ENCODE measurements at regions of chrX and their contacts with region 1.

Region 1: DNA sequence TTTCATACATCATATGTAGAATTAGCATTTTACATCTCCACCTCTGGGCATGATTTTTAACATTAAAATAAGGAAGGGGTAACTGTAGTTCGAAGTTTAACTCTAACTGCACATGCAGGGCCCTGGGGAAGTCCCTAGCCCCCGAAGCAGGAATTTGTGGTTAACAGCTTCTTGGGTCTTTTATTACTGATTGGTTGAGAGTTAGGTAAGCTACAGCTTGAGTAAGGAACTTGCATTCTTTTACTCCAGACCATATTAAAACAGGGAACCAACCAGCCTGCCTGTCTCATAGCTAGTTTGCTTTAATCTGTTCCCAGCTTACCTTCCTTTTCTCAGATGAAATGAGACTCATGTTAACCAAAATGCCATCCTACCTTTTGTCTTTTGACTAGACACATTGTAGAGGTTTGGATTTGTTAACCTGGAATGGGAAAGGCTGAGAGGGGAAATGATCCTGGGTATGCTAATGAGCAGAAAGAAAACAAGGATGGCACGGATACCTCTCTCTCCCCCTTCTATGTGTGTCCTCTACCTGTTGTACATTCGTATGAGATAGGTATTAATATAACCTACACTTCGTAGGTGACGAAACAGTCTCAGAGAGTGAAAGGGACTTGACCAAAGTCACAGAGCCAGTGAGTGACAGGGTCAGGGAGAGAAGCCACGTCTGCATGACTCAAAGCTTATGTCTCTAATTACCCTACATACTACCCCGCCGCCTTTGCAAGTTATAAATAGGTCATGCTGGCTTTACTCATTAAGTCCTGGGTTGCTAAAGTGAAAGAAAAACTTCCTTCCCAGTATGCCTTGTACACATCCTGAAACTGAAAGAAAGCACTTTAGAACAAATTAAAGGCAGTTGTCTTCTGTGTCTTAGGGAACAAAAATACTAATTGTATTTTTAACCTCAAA is 119.5 kb upstream of the AFF2 start:
- DNase-seq: peak; percentile 44
- H3K4me3 Mint-ChIP-seq: peak overlapping the region; percentile 74
- H3K27ac Mint-ChIP-seq: peak overlapping the region; percentile 91
- H3K4me1 Mint-ChIP-seq: peaks cover 28% of the 10 kb centered on the region
- H3K27me3 Mint-ChIP-seq: no peaks in the 10 kb centered on the region

Region 2: DNA sequence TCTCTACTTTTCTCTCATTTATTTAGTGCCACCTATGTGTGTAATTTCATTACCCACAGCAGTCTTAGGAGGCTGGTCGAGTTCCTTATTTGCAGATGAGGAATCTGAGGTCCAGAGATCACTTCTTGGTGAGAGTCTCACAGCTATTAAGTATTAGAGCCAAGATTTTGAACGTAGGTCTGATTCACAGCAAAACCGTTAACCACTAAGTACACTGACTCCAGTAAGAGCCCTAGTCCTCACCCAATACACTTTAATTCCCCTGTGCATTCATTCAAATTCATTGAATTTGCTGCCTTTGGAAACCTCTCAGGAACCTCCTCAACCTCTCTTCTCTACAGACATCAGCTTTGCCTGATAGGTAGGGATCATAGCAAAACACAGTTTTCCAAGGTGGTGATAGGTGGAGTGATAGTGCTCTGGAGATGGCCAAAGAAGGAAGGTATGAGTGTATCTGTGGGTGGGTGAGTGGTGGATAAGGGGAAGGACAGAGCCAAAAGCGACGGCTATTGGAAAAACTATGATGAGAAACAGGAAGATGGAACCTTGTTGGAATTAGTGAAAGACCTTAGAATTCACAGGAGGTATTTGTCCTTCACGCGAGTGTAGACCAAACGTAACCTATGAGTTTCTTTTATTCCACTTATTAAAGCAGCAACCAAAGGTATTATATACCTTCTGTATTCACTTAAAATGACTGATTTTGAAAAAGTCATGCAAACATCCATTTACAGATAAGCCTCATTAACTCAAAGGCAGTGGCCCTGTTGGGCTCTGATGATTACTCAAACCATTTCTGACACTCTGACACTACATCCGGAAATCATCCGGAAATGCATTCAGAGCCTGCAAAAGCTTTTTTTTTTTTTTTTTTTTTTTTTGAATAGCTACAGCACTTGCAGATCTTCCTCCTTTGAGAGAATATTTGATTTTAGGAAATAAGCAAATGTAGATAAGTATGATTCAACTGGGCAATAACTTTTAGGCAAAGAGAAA is 462.9 kb before region 1 on chrX:
- intact Hi-C with region 1: loop called (anchors 2 kb)
- DNase-seq: no peak
- H3K4me3 Mint-ChIP-seq: peak overlapping the region; percentile 47
- H3K27ac Mint-ChIP-seq: peak overlapping the region; percentile 87
- H3K4me1 Mint-ChIP-seq: peaks cover 64% of the 10 kb centered on the region
- H3K27me3 Mint-ChIP-seq: no peaks in the 10 kb centered on the region

Region 3: DNA sequence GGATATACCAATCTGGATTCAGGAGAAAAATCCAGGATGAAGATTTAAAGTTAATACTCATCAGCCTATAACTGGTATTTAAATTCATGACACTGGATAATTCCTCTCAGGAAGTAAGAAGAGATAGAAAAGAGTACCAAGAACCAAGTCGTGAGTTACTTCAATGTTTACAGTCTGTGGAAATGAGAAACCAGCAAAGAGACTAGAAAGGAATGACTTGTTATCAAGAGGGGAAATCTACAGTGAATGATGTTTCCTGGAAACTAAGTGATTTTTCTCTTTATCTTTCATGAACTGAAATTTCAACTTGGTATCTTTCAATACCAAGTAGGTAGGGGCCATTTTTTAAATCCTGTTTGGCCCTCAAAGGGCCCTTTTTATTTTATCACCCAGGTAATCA is 98.4 kb before region 1 on chrX:
- intact Hi-C with region 1: loop called (anchors 1 kb)
- DNase-seq: no peak
- H3K4me3 Mint-ChIP-seq: no peak overlapping the region
- H3K27ac Mint-ChIP-seq: no peak overlapping the region
- H3K4me1 Mint-ChIP-seq: peaks cover 32% of the 10 kb centered on the region
- H3K27me3 Mint-ChIP-seq: no peaks in the 10 kb centered on the region

Region 4: GRCh38 chrX:148466292-148466691 is 85.4 kb after region 1 on chrX:
- intact Hi-C with region 1: loop called (anchors 1 kb)
- DNase-seq: no peak
- H3K4me3 Mint-ChIP-seq: no peak overlapping the region
- H3K27ac Mint-ChIP-seq: no peak overlapping the region
- H3K4me1 Mint-ChIP-seq: peaks cover 6% of the 10 kb centered on the region
- H3K27me3 Mint-ChIP-seq: peaks cover 2% of the 10 kb centered on the region

Region 5: DNA sequence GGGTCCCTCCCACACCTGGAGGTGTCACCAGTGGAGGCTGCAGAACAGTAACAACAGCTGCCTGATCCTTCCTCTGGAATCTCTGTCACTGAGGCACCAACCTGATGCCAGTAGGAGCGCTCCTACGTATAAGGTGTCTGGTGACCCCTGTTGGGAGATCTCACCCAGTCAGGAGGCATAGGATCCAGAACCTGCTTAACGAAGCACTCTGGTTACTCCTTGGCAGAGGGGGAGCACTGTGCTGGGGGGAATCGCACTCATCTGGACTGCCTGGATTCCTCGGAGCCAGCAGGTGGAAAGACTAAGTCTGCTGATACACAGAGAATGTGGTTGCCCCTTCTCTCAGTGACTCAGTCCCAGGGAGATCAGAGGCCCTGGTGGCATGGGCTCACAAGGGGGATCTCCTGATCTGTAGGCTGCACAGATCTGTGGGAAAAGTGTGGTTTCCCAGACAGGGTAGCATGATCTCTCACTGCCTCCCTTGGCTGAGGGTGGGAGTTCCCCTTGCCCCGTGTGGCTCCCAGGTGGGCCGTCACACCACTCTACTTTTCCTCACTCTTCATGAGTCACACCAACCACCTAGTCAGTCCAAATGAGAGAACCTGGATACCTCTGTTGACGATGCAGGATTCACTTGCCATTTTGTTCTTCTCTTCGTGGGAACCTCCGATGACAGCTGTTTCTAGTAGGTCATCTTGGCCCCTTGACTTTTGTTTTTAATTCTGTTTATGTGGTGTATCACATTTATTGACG is 818.2 kb after region 1 on chrX:
- intact Hi-C with region 1: loop called (anchors 5 kb)
- DNase-seq: no peak
- H3K4me3 Mint-ChIP-seq: no peak overlapping the region
- H3K27ac Mint-ChIP-seq: peak overlapping the region; percentile 16
- H3K4me1 Mint-ChIP-seq: peaks cover 4% of the 10 kb centered on the region
- H3K27me3 Mint-ChIP-seq: peaks cover 1% of the 10 kb centered on the region

Measured in activated T-helper 1 cell treated with anti-CD3 and anti-CD28 coated beads, Interleukin-12 subunit alpha, Interleukin-12 subunit beta, Interleukin-2, Interleukin-4 antibody, amounts not matched to agents 30 ng/mL and 10 ng/mL and 1 ng/mL, durations not matched to agents 14 hours and 24 hours and 36 hours (primary cell).